GM12878 (cell line): ENCODE measurements at regions of chrX and their contacts with region 1.

Region 1: GRCh38 chrX:7904562-7904961 is 22.7 kb downstream of the PNPLA4 start:
- DNase-seq: no peak
- ATAC-seq: no peak
- H3K4me3 ChIP-seq: no peak overlapping the region
- H3K27ac ChIP-seq: no peak overlapping the region
- H3K4me1 ChIP-seq: no peaks in the 10 kb centered on the region
- H3K27me3 ChIP-seq: no peaks in the 10 kb centered on the region
- CTCF ChIP-seq: no peak
- EP300 ChIP-seq: no peak
- POLR2A ChIP-seq: no peak
- RAD21 ChIP-seq: no peak

Region 2: GRCh38 chrX:7948483-7948882 is 43.9 kb after region 1 on chrX:
- CTCF ChIA-PET with region 1: no interaction called
- POLR2A ChIA-PET with region 1: no interaction called
- RAD21 ChIA-PET with region 1: no interaction called
- SMC1A ChIA-PET with region 1: no interaction called
- in situ Hi-C with region 1: loop called (anchors 5 kb)
- intact Hi-C with region 1: no loop called
- DNase-seq: no peak
- ATAC-seq: no peak
- H3K4me3 ChIP-seq: no peak overlapping the region
- H3K27ac ChIP-seq: no peak overlapping the region
- H3K4me1 ChIP-seq: peaks cover 9% of the 10 kb centered on the region; the same call in 1 of the 2 replicates
- H3K27me3 ChIP-seq: no peaks in the 10 kb centered on the region
- CTCF ChIP-seq: no peak
- EP300 ChIP-seq: no peak
- POLR2A ChIP-seq: no peak
- RAD21 ChIP-seq: no peak